IMR-90 (cell line): ENCODE measurements at regions of chr9 and their contacts with region 1.

Region 1: DNA sequence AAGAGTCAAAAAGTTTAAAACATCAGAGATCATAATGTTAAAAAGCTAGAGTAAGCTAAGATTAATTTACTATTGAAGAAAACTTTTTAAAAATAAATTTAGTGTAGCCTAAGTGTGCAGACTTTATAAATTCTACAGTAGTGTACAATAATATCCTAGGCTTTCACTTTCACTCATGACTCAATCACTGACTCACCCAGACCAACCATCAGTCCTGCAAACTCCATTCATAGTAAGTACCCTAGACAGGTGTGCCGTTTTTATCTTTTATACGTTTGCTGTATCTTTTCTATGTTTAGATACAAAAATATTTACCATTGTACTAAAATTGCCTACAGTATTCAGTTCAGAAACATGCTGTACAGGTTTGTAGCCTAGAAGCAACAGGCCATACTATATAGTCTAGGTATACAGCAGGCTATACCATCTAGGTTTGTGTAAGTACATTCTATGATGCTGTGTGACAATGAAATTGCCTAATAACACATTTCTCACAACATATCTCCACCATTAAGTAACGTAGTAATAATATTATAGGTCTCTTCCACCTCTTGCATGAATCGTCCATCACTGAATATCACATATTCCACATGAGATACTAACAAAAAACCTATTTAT is 59.2 kb downstream of the MEGF9 start:
- DNase-seq: peak; percentile 70
- ATAC-seq: peak; percentile 86
- H3K4me3 ChIP-seq: no peak overlapping the region
- H3K27ac ChIP-seq: no peak overlapping the region
- H3K4me1 ChIP-seq: peaks cover 2% of the 10 kb centered on the region; the same call in 1 of the 2 replicates
- H3K27me3 ChIP-seq: no peaks in the 10 kb centered on the region
- CTCF ChIP-seq: no peak
- POLR2A ChIP-seq: no peak
- RAD21 ChIP-seq: no peak

Region 2: GRCh38 chr9:120832807-120833206 is 177.7 kb after region 1 on chr9:
- CTCF ChIA-PET with region 1: no interaction called
- POLR2A ChIA-PET with region 1: interaction called, 11 read pairs
- dilution Hi-C with region 1: no loop called
- in situ Hi-C with region 1: no loop called
- intact Hi-C with region 1: no loop called
- DNase-seq: peak; percentile 57
- ATAC-seq: peak; percentile 77
- H3K4me3 ChIP-seq: no peak overlapping the region
- H3K27ac ChIP-seq: no peak overlapping the region
- H3K4me1 ChIP-seq: no peaks in the 10 kb centered on the region; the same call in 1 of the 2 replicates
- H3K27me3 ChIP-seq: no peaks in the 10 kb centered on the region
- CTCF ChIP-seq: no peak
- POLR2A ChIP-seq: no peak
- RAD21 ChIP-seq: no peak